Activated CD8-positive, alpha-beta T cell treated with anti-CD3 and anti-CD28 coated beads, Interleukin-2, amount 10 ng/mL, durations not matched to agents 7 days and 5 days (primary cell): ENCODE measurements at regions of chr17 and their contacts with region 1.

Region 1: GRCh38 chr17:4789901-4790704 is 1.3 kb downstream of the GLTPD2 start:
- DNase-seq: peak; percentile 85
- ATAC-seq: peak; percentile 95
- H3K4me3 Mint-ChIP-seq: peak overlapping the region; percentile 80
- H3K27ac Mint-ChIP-seq: peak overlapping the region; percentile 93
- H3K4me1 Mint-ChIP-seq: peaks cover 28% of the 10 kb centered on the region
- H3K27me3 Mint-ChIP-seq: peaks cover 39% of the 10 kb centered on the region

Region 2: DNA sequence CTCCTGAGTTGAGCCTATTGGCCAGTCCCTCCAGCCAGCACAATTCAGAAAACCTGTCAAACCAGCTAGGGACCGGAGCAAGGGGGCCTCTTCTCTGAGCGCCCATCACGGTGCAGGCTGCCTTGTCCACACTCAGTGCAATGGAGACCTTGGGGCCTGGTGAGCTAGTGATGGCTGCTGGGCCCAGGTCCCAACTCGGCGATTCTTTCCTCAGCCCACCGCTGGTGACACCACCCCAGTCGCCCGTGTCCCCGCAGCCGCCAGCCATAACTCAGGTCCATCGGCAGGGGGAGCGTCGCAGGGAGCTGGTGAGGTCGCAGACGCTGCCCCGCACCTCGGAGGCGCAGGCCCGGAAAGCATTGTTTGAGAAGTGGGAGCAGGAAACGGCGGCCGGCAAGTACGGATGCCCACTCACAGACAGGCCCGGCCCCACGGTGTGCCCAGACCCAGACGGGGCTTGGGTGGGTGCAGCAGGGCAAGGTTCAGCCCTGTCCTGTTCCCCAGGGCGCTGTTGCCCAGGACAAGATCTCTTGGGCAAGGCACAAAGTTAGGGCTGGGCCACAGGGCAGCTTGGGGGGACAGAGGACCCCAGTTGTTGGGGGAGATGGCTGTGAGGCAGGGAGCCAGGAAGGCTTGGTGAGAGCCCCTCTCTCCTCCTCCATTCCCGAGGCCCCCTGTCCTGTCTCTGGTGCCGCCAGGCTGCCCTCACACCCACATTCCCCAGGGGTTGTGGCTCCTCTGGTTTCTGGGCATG is 195.0 kb before region 1 on chr17:
- CTCF ChIA-PET with region 1: no interaction called
- POLR2A ChIA-PET with region 1: no interaction called
- DNase-seq: peak; percentile 70
- ATAC-seq: peak; percentile 83
- H3K4me3 Mint-ChIP-seq: no peak overlapping the region
- H3K27ac Mint-ChIP-seq: peak overlapping the region; percentile 49
- H3K4me1 Mint-ChIP-seq: peaks cover 6% of the 10 kb centered on the region
- H3K27me3 Mint-ChIP-seq: no peaks in the 10 kb centered on the region

Region 3: DNA sequence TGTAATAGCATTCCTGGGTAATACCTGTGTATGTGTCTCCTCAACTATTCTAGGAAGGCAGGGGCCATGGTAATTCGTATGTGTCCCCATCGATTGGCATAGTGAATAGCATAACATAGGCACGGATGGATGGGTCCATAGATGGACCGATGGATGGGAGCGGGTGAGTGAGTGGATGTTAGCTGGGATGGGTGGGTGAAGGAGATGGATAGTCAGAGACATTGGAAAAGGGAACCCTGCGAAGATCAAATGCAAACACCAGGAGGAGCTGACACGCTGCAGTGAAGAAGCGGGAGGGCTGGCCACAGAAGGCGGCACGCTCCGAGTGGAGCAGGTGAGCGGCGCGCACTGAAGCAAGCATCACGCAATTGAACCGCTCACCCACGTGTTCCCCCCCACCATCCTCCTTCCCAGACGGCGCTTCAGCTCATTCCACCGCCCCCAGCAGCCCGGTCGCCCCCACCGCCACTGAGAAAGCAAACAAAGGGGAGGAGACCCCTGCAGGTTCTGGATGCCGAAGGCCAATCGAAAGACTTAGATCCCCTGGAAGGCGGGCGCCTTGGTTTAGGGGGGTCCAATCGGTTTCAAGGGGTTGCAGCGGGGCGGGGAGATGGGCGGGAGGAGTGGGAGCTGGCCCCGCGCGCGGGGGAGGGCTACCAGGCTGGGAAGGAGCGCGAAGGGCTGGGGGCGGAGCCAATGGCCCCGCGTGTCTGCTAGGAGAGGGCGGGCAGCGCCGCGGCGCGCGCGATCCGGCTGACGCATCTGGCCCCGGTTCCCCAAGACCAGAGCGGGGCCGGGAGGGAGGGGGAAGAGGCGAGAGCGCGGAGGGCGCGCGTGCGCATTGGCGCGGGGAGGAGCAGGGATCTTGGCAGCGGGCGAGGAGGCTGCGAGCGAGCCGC is 80.1 kb before region 1 on chr17 and contains the start of gene ARRB2:
- CTCF ChIA-PET with region 1: interaction called, 37 read pairs
- POLR2A ChIA-PET with region 1: interaction called, 4 read pairs
- DNase-seq: peak; percentile 100
- ATAC-seq: peak; percentile 87
- H3K4me3 Mint-ChIP-seq: peak within 1 kb of the TSS; percentile 94
- H3K27ac Mint-ChIP-seq: peak within 1 kb of the TSS; percentile 96
- H3K4me1 Mint-ChIP-seq: peaks cover 66% of the 10 kb centered on the region
- H3K27me3 Mint-ChIP-seq: no peaks in the 10 kb centered on the region
- total RNA-seq, gene ARRB2: 302 to 316 TPM

Region 4: GRCh38 chr17:4733073-4733531 is 57.0 kb before region 1 on chr17:
- CTCF ChIA-PET with region 1: interaction called, 18 read pairs
- POLR2A ChIA-PET with region 1: interaction called, 9 read pairs
- DNase-seq: peak; percentile 40
- ATAC-seq: no peak
- H3K4me3 Mint-ChIP-seq: peak overlapping the region; percentile 95
- H3K27ac Mint-ChIP-seq: peak overlapping the region; percentile 63
- H3K4me1 Mint-ChIP-seq: peaks cover 39% of the 10 kb centered on the region
- H3K27me3 Mint-ChIP-seq: peaks cover 1% of the 10 kb centered on the region

Region 5: DNA sequence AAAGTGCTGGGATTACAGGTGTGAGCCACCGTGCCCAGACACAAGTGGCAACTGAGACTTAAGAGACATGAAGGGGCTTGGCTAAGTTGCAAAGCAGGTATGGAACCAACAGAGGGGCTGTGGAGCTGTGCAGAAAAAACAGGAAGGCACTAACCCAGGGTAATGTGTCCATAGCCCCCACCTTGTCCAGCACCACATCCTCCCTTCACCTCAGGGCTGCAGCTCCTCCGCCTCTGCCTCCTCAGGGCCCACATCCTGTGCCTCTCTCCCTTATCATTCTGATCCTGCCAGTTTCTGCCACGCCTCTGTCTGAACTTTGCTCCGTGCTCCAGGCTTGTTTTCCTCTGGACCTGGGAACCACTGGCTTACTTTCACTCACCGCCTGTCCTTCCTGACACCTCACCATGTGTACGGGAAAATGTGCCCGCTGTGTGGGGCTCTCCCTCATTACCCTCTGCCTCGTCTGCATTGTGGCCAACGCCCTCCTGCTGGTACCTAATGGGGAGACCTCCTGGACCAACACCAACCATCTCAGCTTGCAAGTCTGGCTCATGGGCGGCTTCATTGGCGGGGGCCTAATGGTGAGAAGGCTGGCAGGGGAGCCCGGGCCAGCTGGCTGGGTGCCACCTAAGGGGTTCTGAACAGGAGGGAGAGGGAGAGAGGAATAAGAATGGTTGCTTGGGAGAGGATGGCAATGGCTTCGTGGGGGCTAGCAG is 18.4 kb before region 1 on chr17 and contains the start of gene TM4SF5:
- CTCF ChIA-PET with region 1: interaction called, 25 read pairs
- POLR2A ChIA-PET with region 1: interaction called, 4 read pairs
- DNase-seq: peak; percentile 75
- ATAC-seq: peak; percentile 92
- H3K4me3 Mint-ChIP-seq: peak within 1 kb of the TSS; percentile 9
- H3K27ac Mint-ChIP-seq: peak within 1 kb of the TSS; percentile 69
- H3K4me1 Mint-ChIP-seq: peaks cover 26% of the 10 kb centered on the region
- H3K27me3 Mint-ChIP-seq: peaks cover 12% of the 10 kb centered on the region
- total RNA-seq, gene TM4SF5: not detected

Region 6: DNA sequence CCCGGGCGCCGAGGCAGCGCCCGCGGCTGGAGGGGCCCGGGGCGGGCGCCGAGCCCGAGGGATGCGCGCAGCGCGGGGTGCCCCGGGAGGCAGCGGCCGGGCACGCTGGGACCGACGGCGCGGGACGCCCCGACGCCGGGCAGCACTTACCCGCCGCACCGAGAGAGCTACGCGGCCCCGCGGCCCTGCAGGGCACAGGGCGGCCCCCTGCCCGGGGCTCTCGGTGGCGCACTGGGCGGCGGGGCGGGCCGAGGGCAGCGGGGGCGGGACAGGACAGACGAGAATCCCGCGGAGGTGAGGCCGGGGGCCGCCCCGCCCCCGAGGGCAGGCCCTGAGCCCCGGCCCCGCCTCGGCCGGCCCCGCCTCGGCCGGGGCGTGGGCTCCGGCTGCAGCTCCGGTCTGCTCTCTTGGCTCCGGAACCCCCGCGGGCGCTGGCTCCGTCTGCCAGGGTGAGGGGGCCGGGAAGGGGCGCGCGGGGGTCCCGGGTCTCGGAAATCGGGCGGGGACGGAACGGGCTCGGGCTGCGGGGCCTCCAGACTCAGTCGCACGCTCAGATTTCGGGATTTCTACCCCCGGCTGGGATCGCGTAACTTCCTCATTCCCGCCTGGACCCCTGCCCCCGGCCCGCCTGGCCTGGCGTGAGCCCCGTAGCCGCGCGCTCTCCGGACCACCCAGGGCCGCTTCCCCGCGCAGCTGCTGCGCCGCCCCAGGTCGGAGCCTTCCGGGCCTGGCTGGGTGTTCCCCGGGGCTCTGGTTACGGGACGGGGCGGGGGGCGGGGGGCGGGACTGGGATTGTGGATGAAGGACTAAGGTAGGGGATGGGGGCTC is 16.9 kb after region 1 on chr17 and contains the start of gene PLD2:
- CTCF ChIA-PET with region 1: interaction called, 8 read pairs
- POLR2A ChIA-PET with region 1: interaction called, 12 read pairs
- DNase-seq: peak; percentile 90
- ATAC-seq: peak; percentile 99
- H3K4me3 Mint-ChIP-seq: peak within 1 kb of the TSS; percentile 76
- H3K27ac Mint-ChIP-seq: no peak within 1 kb of the TSS
- H3K4me1 Mint-ChIP-seq: peaks cover 16% of the 10 kb centered on the region
- H3K27me3 Mint-ChIP-seq: peaks cover 5% of the 10 kb centered on the region
- total RNA-seq, gene PLD2: 11.6 to 20.0 TPM

Region 7: GRCh38 chr17:4903051-4903818 is 113.1 kb after region 1 on chr17 and contains the start of gene CHRNE:
- CTCF ChIA-PET with region 1: interaction called, 10 read pairs
- POLR2A ChIA-PET with region 1: no interaction called
- DNase-seq: peak; percentile 87
- ATAC-seq: peak; percentile 45
- H3K4me3 Mint-ChIP-seq: peak within 1 kb of the TSS; percentile 12
- H3K27ac Mint-ChIP-seq: peak within 1 kb of the TSS; percentile 46
- H3K4me1 Mint-ChIP-seq: peaks cover 38% of the 10 kb centered on the region
- H3K27me3 Mint-ChIP-seq: peaks cover 13% of the 10 kb centered on the region
- total RNA-seq, gene CHRNE: 0.26 to 0.45 TPM